ENCODE measurements at regions of chr19 and their contacts with region 1.

Region 1: GRCh38 chr19:3375221-3376090 is 9.1 kb downstream of the NFIC start:
- DNase-seq: no peak
- H3K4me3 ChIP-seq: no peak overlapping the region
- H3K4me3 Mint-ChIP-seq: no peak overlapping the region
- H3K27ac Mint-ChIP-seq: no peak overlapping the region
- H3K4me1 ChIP-seq: no peaks in the 10 kb centered on the region
- H3K4me1 Mint-ChIP-seq: no peaks in the 10 kb centered on the region
- H3K27me3 ChIP-seq: no peaks in the 10 kb centered on the region
- H3K27me3 Mint-ChIP-seq: peaks cover 2% of the 10 kb centered on the region
- CTCF ChIP-seq: no peak

Region 2: DNA sequence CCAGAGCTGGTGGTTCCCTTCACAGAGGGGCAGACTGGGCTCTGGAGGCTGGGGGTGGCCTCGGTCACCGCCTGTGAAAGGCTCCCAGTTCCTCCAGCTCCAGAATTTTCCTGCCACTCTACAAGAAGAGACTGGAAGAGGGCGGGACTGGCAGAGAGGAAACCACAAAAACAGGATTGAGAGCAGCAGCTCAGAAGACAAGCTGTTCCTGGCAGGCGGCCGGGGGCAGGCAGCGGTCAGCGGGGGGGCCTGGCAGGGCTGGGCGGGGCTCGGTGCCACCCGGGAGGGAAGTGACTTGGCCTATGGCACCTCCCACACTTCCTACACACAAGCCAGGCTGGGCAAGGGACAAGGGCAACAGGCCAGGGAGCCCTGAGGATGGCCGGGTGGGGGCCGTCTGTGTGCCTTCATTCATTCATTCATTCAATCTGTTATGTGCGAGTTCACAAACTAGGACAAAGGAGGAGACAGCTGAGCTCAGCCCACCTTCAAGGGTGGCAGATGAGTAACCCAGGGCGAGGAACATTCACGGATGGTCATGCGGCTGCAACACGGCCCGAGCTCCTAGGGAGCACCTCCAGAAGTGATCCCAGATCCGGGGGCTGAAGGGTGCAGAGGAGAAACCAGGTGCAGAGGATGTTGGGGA is 1343.0 kb before region 1 on chr19:
- CTCF ChIA-PET with region 1: no interaction called
- POLR2A ChIA-PET with region 1: interaction called, 15 read pairs
- intact Hi-C with region 1: no loop called
- DNase-seq: no peak
- H3K4me3 ChIP-seq: no peak overlapping the region
- H3K4me3 Mint-ChIP-seq: no peak overlapping the region
- H3K27ac Mint-ChIP-seq: no peak overlapping the region
- H3K4me1 ChIP-seq: no peaks in the 10 kb centered on the region
- H3K4me1 Mint-ChIP-seq: no peaks in the 10 kb centered on the region
- H3K27me3 ChIP-seq: no peaks in the 10 kb centered on the region
- H3K27me3 Mint-ChIP-seq: no peaks in the 10 kb centered on the region
- CTCF ChIP-seq: no peak

Region 3: DNA sequence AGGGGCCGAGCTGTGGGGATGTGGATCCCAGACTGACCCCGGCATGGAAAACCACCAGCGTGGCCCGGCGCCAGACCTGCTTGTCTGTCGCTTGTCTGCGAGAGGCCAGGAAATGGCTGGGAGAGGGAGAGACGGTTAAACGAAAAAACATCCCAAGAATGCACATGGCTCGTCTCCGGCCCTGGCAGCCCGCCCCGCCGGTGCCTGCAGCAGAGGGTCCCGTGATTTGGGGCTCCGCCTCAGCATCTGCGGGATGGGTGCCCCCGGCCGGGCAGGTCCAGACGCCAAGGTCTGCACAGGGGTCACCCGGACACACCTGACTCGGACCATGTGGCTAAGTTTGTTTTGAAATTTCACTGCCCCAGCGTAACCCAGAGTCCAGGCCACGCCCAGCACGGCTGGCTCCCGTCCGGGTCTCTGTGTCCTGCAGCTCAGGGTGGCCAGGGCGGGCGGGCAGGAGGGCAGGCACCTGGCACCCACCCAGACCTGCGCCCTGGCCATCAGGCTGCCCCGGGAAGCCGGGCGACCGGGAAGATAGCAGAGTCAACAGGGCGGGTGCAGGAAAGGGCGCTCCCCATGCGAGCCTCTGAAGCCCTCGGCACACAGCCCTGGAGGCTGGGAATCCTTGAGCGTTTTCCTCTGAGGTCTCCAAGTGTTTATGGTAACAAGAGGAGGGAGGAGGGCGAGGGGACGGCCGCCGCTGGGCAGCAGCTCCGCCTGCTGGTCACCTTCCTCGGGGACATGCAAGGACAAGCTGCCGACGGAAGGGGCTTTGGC is 796.4 kb before region 1 on chr19:
- CTCF ChIA-PET with region 1: no interaction called
- POLR2A ChIA-PET with region 1: no interaction called
- intact Hi-C with region 1: no loop called
- DNase-seq: peak; percentile 88 to 89
- H3K4me3 ChIP-seq: peak overlapping the region; percentile 40
- H3K4me3 Mint-ChIP-seq: peak overlapping the region; percentile 70
- H3K27ac Mint-ChIP-seq: peak overlapping the region; percentile 42
- H3K4me1 ChIP-seq: peaks cover 29% of the 10 kb centered on the region
- H3K4me1 Mint-ChIP-seq: no peaks in the 10 kb centered on the region
- H3K27me3 ChIP-seq: no peaks in the 10 kb centered on the region
- H3K27me3 Mint-ChIP-seq: no peaks in the 10 kb centered on the region
- CTCF ChIP-seq: peak; percentile 89 to 94

Region 4: GRCh38 chr19:3420244-3420755 is 44.8 kb after region 1 on chr19:
- CTCF ChIA-PET with region 1: interaction called, 11 read pairs
- POLR2A ChIA-PET with region 1: no interaction called
- intact Hi-C with region 1: no loop called
- DNase-seq: no peak
- H3K4me3 ChIP-seq: no peak overlapping the region
- H3K4me3 Mint-ChIP-seq: no peak overlapping the region
- H3K27ac Mint-ChIP-seq: no peak overlapping the region
- H3K4me1 ChIP-seq: no peaks in the 10 kb centered on the region
- H3K4me1 Mint-ChIP-seq: no peaks in the 10 kb centered on the region
- H3K27me3 ChIP-seq: no peaks in the 10 kb centered on the region
- H3K27me3 Mint-ChIP-seq: no peaks in the 10 kb centered on the region
- CTCF ChIP-seq: no peak

Region 5: GRCh38 chr19:3557461-3558248 is 182.2 kb after region 1 on chr19 and contains the start of gene MFSD12:
- CTCF ChIA-PET with region 1: no interaction called
- POLR2A ChIA-PET with region 1: no interaction called
- intact Hi-C with region 1: no loop called
- DNase-seq: peak; percentile 91 to 94
- H3K4me3 ChIP-seq: peak within 1 kb of the TSS; percentile 90
- H3K4me3 Mint-ChIP-seq: peak within 1 kb of the TSS; percentile 99
- H3K27ac Mint-ChIP-seq: peak within 1 kb of the TSS; percentile 91
- H3K4me1 ChIP-seq: no peaks in the 10 kb centered on the region
- H3K4me1 Mint-ChIP-seq: peaks cover 10% of the 10 kb centered on the region
- H3K27me3 ChIP-seq: no peaks in the 10 kb centered on the region
- H3K27me3 Mint-ChIP-seq: no peaks in the 10 kb centered on the region
- CTCF ChIP-seq: no peak
- total RNA-seq, gene MFSD12: 60.6 and 61.7 TPM in 2 replicates

Measured in Caco-2 (cell line).